Heart right ventricle (tissue), 16 donors: ENCODE measurements at regions of chr5 and their contacts with region 1.

Region 1: DNA sequence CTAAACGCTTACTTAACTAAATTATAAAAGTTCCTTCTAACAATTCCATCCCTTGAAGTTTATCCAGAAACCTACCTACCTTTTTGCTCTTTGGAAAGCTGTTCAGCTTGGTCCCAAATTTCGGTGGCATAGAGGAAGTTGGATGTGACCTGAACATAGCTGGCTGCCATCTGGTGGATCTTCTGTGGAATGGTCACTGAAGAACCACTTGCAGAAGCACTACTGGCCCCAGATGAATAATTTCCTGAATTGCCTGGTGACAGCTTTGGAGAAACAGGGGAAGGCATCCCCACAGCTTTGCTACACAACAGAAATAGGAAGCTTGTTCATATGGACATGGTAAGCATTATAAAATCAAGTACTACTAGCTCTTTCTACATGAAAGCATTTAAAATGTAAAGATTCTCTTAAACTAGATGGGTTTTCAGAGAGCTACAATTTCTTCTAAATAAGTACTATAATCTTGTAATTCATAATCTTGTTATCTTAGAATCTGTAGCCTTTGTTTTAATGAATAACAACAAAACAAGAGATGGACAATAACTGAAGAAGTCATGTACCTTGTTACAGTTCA is 9.9 kb downstream of the LEAP2 start:
- DNase-seq: peak in 1 of 2 donors; percentile 59
- ATAC-seq: peak; percentile 72 to 91 (median 86)
- H3K4me3 ChIP-seq: no peak overlapping the region
- H3K27ac ChIP-seq: no peak overlapping the region
- H3K4me1 ChIP-seq: peaks cover 0 to 10% (median under 1%) of the 10 kb centered on the region in 9 donors
- H3K27me3 ChIP-seq: no peaks in the 10 kb centered on the region
- CTCF ChIP-seq: peak; percentile 39 to 78 (median 68)

Region 2: GRCh38 chr5:132456296-132457001 is 426.9 kb before region 1 on chr5:
- intact Hi-C with region 1: no loop called
- DNase-seq: peak in 1 of 2 donors; percentile 48
- ATAC-seq: peak in 7 of 8 donors; percentile 37 to 67 (median 56)
- H3K4me3 ChIP-seq: peak overlapping the region in 1 of 10 donors; percentile 24
- H3K27ac ChIP-seq: peak overlapping the region; percentile 15 to 96 (median 66)
- H3K4me1 ChIP-seq: peaks cover 8 to 94% (median 60%) of the 10 kb centered on the region in 9 donors
- H3K27me3 ChIP-seq: no peaks in the 10 kb centered on the region
- CTCF ChIP-seq: no peak

Region 3: GRCh38 chr5:132506094-132506692 is 377.2 kb before region 1 on chr5:
- intact Hi-C with region 1: loop called in 1 of 10 experiments (anchors 5 kb)
- DNase-seq: no peak
- ATAC-seq: peak in 4 of 8 donors; percentile 26 to 59 (median 46)
- H3K4me3 ChIP-seq: no peak overlapping the region
- H3K27ac ChIP-seq: no peak overlapping the region
- H3K4me1 ChIP-seq: peaks cover 6 to 39% (median 21%) of the 10 kb centered on the region in 9 donors
- H3K27me3 ChIP-seq: no peaks in the 10 kb centered on the region
- CTCF ChIP-seq: peak in 7 of 9 donors; percentile 22 to 65 (median 54)

Region 4: DNA sequence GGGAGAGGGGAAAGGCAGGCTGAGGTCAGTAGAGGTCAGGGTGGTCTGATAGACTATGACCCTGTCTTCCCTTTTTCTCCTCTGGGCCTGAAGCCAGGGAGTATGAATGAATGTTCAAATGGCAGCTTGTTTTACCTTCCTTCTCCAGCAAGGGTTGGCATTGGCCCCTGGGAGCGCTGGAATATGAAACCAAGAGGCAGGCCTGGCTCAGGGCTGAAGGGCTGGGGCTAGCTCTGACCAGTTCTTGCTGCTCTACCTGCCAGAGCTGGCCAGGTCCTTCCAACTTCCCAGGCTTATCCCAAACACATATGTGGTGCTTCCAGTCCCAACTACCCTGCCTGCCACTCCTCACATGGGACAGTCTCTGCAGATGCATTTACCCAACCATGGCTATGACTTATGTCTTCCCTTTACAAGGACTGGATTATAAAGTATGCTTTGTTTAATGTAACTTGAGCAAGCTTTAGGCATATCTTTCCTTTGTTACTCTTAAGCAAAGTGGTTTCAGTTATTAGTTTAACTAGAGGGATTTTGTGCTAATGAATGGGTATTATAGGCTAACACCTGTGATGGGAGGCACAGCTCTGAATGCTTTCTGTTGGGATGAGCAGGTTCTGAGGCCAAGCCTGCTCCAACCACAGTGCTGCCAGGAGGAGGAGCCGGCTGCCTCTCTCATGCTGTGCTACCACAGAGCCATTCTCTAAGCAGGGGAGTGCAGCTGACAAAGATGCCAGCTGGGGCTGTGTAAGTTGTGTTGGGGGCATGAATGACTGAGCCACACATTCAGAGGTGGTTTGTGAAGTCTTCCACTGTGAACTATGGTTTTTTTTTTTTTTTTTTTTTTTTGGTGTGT is 130.0 kb before region 1 on chr5:
- intact Hi-C with region 1: loop called in 1 of 10 experiments (anchors 10 kb)
- DNase-seq: no peak
- ATAC-seq: peak in 3 of 8 donors; percentile 6 to 41 (median 21)
- H3K4me3 ChIP-seq: no peak overlapping the region
- H3K27ac ChIP-seq: no peak overlapping the region
- H3K4me1 ChIP-seq: no peaks in the 10 kb centered on the region
- H3K27me3 ChIP-seq: peaks cover 0 to 3% (median 0%) of the 10 kb centered on the region in 7 donors
- CTCF ChIP-seq: peak in 3 of 9 donors; percentile 4 to 16 (median 10)

Region 5: DNA sequence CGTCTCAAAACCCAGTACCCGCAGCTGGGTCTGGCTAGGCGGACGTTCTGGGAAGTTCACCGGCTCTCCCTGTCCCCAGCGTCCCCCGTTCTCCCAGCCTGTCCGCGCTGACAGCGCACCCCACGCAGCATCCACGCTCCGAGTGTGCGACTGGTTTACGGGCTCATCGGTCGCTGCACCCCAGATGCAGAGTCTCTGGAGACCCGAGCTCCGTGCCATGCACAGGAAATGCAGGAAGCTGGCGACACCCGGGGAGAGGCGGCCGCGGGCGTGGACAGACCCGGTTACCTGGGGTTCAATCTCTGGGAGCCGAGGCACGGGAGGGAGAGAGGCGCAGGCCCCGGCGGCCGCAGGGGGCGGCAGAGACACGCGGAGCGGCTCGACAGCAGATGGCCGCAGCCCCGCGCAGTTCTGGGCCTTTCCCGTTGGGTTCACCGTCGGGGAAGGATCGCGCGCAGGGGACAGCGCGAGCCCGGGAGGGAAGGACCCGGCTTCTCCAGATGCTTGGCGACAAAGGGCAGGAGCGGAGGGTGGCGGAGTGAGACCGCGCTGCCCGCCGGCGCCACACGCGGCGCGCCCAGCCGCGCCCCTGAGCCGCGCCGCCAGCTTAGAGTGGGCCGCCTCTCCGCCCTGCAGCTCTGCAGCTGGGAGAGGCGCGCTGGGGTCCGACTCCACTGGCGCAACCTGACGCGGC is 53.5 kb before region 1 on chr5:
- intact Hi-C with region 1: loop called in 8 of 10 experiments (anchors 1 to 5 kb)
- DNase-seq: peak; percentile 78 to 80
- ATAC-seq: peak; percentile 88 to 94 (median 90)
- H3K4me3 ChIP-seq: peak overlapping the region; percentile 46 to 89 (median 77)
- H3K27ac ChIP-seq: peak overlapping the region; percentile 55 to 92 (median 86)
- H3K4me1 ChIP-seq: peaks cover 6 to 33% (median 19%) of the 10 kb centered on the region in 9 donors
- H3K27me3 ChIP-seq: peaks cover 0 to 62% (median 0%) of the 10 kb centered on the region in 7 donors
- CTCF ChIP-seq: peak in 8 of 9 donors; percentile 88 to 98 (median 93)

Region 6: DNA sequence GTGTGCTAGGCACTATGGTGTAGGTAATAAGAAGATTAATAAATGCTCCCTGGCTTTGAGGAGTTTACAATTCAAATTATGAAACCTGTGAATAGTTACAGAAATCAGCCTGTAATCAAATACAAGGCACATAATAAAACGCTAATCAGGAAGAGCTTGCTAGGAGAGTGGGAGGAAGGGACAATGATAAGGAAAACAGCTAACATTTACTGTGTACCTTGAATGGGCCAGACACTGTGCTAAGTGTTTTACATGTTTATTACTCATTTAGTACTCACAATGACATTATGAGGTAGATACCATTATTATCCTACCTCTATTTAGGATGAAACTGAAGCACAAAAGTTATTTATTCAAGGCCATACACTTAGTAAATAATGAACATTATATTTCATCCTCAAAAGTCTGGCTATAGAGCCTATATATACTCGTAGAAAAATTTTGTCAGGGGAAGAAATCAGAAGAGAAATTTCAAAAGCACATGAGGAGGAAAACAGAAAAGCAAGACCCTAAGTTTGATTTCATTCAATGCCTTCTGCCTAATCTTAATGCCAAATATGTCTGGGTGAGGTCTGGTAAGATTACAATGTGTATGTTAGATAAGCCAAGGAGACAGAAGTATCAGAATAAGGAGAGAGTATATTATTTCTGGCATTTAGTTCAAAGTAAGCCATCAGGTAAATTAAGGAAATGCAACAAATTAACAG is 44.2 kb after region 1 on chr5:
- intact Hi-C with region 1: no loop called
- DNase-seq: no peak
- ATAC-seq: no peak
- H3K4me3 ChIP-seq: no peak overlapping the region
- H3K27ac ChIP-seq: no peak overlapping the region
- H3K4me1 ChIP-seq: peaks cover 0 to 19% (median 16%) of the 10 kb centered on the region in 9 donors
- H3K27me3 ChIP-seq: no peaks in the 10 kb centered on the region
- CTCF ChIP-seq: no peak

Region 7: DNA sequence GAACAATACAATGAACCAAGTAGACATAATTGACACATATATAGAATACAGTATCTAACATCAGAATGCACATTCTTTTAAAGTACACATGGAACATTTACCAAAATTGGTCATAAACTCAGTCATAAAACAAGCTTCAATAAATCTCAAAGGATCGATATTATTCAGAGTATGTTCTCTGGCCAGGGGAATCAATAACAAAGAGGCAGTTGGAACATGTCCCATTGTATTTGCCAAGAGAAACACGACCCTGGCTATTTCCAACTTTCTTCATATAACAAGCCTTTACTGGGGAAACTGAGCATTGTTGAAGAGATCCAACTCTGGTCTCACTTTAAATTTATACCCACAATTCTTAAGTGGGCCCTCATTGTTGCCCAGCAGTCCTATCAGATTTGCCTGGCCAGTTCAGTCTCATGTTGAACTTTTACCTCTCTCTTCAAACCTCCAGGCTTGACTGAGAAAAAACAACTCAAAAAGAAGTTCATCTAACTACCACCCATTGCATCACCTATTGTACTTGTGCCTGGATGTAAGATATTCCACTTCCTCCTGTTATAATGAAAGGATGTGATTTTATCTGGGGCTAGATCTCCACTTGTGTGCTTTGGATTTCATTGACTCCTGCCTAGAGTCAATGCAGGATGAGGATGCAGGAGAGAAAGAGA is 330.9 kb after region 1 on chr5:
- intact Hi-C with region 1: no loop called
- DNase-seq: no peak
- ATAC-seq: peak in 1 of 8 donors; percentile 45
- H3K4me3 ChIP-seq: no peak overlapping the region
- H3K27ac ChIP-seq: no peak overlapping the region
- H3K4me1 ChIP-seq: peaks cover 0 to 6% (median 0%) of the 10 kb centered on the region in 9 donors
- H3K27me3 ChIP-seq: peaks cover 0 to 25% (median 10%) of the 10 kb centered on the region in 7 donors
- CTCF ChIP-seq: no peak